Activated naive CD8-positive, alpha-beta T cell treated with anti-CD3 and anti-CD28 coated beads, Interleukin-2, amount 10 ng/mL, durations not matched to agents 7 days and 5 days (primary cell): ENCODE measurements at regions of chr16 and their contacts with region 1.

Region 1: DNA sequence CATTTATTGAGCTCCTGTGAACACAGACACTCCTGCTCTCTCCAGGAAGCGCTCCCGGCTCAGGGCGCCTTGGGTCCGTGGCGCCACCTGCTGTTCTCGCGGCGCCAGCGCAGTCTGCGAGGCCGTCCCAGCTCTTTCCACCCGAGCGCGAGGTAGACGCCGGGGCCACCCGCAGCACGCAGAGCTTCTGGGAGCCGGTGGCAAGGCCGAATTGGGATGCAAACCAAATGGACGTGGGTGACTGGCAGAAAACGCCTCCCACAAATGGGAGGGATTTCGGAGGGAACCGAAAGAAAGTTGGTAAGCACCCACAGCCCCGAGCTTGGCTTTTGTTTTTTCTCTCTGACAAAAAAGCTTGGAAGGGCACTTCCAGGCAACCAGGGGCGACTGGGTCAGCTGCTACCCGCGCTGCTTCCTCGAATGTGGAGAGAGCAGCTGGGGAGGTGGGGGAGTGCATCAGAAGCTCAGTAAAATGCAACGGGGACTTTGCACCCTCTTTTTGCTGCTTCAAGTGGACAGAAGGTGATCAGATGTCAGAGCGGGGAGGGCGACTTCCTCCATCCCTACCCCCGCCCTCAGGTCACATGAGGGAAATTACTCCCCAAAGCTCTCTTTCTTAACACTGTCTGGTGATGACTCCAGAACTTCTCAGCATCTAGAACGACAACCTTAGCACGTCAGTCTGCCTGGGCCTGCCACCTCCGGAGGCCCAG is 13.5 kb upstream of the N4BP1 start:
- DNase-seq: peak; percentile 92
- ATAC-seq: peak; percentile 94
- H3K4me3 Mint-ChIP-seq: peak overlapping the region; percentile 87
- H3K27ac Mint-ChIP-seq: peak overlapping the region; percentile 82
- H3K4me1 Mint-ChIP-seq: peaks cover 37% of the 10 kb centered on the region
- H3K27me3 Mint-ChIP-seq: no peaks in the 10 kb centered on the region

Region 2: DNA sequence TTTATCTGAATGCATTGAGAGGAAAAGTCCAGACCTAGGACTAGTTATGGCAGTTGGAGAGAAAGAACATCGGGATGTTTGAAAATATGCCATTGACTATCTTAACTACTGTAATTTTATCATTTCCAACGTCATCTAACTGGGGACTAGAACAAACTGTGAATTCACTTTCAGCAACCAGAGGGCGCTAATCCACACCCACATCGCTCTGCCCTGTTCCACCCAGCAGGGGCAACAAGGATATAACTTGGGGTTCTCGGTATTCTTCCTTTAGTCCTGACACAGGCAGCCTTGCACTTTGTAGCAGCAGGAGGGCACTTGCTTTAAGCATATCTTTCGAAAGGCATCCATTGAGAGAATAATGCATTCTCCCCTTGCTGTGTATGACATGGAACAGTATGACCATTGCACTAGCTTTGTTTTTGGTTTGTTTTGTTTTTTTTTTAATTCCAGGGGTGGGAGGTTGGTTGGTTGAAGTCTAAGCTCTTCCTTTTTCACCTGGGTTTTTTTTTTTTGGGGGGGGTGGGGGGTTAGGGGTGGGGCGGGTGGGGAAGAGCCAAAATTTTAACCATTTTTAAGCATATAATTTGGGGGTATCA is 269.8 kb before region 1 on chr16:
- POLR2A ChIA-PET with region 1: interaction called, 11 read pairs
- DNase-seq: peak; percentile 47
- ATAC-seq: peak; percentile 92
- H3K4me3 Mint-ChIP-seq: no peak overlapping the region
- H3K27ac Mint-ChIP-seq: peak overlapping the region; percentile 78
- H3K4me1 Mint-ChIP-seq: peaks cover 7% of the 10 kb centered on the region
- H3K27me3 Mint-ChIP-seq: no peaks in the 10 kb centered on the region

Region 3: GRCh38 chr16:48365581-48366164 is 257.8 kb before region 1 on chr16:
- POLR2A ChIA-PET with region 1: interaction called, 17 read pairs
- DNase-seq: peak; percentile 88
- ATAC-seq: peak; percentile 97
- H3K4me3 Mint-ChIP-seq: peak overlapping the region; percentile 91
- H3K27ac Mint-ChIP-seq: peak overlapping the region; percentile 99
- H3K4me1 Mint-ChIP-seq: peaks cover 43% of the 10 kb centered on the region
- H3K27me3 Mint-ChIP-seq: no peaks in the 10 kb centered on the region

Region 4: DNA sequence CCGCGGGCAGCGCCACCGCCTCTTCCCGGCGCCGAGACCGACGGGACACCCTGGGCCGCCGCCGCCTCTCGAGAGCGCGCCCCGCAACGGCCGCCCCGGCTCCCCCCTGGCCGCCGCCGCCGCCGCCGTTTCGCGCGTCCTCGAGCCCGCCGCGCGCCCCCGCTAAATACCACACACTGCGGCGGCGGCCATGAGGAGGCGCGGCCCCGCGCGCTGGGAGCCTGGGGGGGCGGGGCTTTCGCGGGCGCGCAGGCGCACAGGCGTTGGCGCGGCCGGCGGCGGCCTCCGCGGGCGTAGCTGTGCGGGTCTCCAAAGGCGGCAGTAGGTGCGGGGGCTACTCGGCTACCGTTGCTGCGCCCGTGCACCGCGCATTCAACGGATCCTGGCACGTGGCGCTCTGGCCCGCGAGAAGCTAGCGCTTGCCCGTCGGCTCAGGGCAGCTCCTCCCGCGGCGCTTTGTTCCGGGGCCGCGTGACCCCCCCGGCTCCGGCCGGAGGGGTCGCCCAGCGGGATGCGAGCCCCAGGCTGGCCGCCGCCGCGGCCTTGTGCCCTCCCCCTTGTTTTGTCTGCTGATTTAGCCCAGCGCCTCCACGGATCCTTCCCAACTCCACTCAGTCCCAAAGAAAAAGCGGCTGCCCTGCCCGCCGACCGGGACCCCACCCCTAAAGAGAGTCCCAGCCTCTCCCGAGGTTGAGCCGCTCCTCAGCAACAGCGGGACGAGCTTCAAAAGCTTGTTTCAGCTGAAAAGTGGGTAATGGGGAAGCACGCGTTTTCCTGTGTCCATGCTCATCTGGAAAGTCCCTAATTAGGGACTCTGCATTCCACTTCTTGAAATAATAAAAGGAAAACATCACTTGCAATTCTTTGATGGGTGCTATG is 237.9 kb before region 1 on chr16 and contains the start of gene SIAH1:
- POLR2A ChIA-PET with region 1: interaction called, 12 read pairs
- DNase-seq: peak; percentile 97
- ATAC-seq: peak; percentile 79
- H3K4me3 Mint-ChIP-seq: peak within 1 kb of the TSS; percentile 95
- H3K27ac Mint-ChIP-seq: peak within 1 kb of the TSS; percentile 90
- H3K4me1 Mint-ChIP-seq: peaks cover 17% of the 10 kb centered on the region
- H3K27me3 Mint-ChIP-seq: no peaks in the 10 kb centered on the region
- total RNA-seq, gene SIAH1: 15.9 to 16.5 TPM

Region 5: GRCh38 chr16:48535831-48536613 is 87.4 kb before region 1 on chr16:
- POLR2A ChIA-PET with region 1: interaction called, 12 read pairs
- DNase-seq: peak; percentile 46
- ATAC-seq: peak; percentile 25
- H3K4me3 Mint-ChIP-seq: no peak overlapping the region
- H3K27ac Mint-ChIP-seq: peak overlapping the region; percentile 16
- H3K4me1 Mint-ChIP-seq: peaks cover 18% of the 10 kb centered on the region
- H3K27me3 Mint-ChIP-seq: no peaks in the 10 kb centered on the region

Region 6: GRCh38 chr16:48583075-48584065 is 40.1 kb before region 1 on chr16:
- POLR2A ChIA-PET with region 1: no interaction called
- DNase-seq: no peak
- ATAC-seq: no peak
- H3K4me3 Mint-ChIP-seq: no peak overlapping the region
- H3K27ac Mint-ChIP-seq: no peak overlapping the region
- H3K4me1 Mint-ChIP-seq: peaks cover 18% of the 10 kb centered on the region
- H3K27me3 Mint-ChIP-seq: no peaks in the 10 kb centered on the region

Region 7: GRCh38 chr16:48596326-48596725 is 27.1 kb before region 1 on chr16:
- POLR2A ChIA-PET with region 1: no interaction called
- DNase-seq: no peak
- ATAC-seq: peak; percentile 87
- H3K4me3 Mint-ChIP-seq: peak overlapping the region; percentile 60
- H3K27ac Mint-ChIP-seq: peak overlapping the region; percentile 64
- H3K4me1 Mint-ChIP-seq: peaks cover 40% of the 10 kb centered on the region
- H3K27me3 Mint-ChIP-seq: no peaks in the 10 kb centered on the region

Region 8: GRCh38 chr16:48609652-48610029 is 13.8 kb before region 1 on chr16:
- POLR2A ChIA-PET with region 1: interaction called, 29 read pairs
- DNase-seq: no peak
- ATAC-seq: peak; percentile 39
- H3K4me3 Mint-ChIP-seq: no peak overlapping the region
- H3K27ac Mint-ChIP-seq: peak overlapping the region; percentile 59
- H3K4me1 Mint-ChIP-seq: peaks cover 38% of the 10 kb centered on the region
- H3K27me3 Mint-ChIP-seq: no peaks in the 10 kb centered on the region

Region 9: DNA sequence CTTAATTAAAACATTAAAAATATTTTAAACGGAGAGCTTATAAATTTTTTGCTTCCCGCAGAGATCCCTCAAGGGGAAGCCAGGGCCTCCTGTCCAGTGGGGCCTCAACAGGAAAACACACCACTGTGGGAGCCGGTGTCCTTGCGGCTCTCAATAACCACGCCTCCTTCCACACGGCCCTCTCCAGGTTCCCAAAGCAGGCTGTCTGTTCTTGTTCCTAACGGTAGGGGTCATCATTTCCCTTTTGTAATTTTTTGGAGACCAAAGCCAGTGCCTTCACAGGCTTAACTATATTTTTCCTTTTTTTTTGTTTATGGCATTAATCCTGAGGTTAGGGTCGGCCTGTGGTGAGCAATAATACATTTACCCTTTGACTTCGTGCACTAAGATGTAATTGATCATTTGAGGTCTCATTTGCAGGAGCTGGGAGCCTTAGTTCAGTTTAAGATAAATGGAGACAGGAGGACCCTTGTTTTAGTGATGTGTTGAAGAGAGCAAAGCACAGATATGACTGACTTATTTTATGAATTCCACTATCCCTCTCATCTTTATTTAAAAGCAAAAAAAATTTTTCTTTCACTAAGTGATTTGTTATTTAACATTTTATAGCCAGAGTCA is 64.1 kb after region 1 on chr16:
- POLR2A ChIA-PET with region 1: no interaction called
- DNase-seq: peak; percentile 32
- ATAC-seq: peak; percentile 56
- H3K4me3 Mint-ChIP-seq: no peak overlapping the region
- H3K27ac Mint-ChIP-seq: no peak overlapping the region
- H3K4me1 Mint-ChIP-seq: peaks cover 1% of the 10 kb centered on the region
- H3K27me3 Mint-ChIP-seq: peaks cover 5% of the 10 kb centered on the region